Activated CD4-positive, alpha-beta T cell treated with anti-CD3 and anti-CD28 coated beads for 36 hours (primary cell): ENCODE measurements at regions of chr17 and their contacts with region 1.

Region 1: DNA sequence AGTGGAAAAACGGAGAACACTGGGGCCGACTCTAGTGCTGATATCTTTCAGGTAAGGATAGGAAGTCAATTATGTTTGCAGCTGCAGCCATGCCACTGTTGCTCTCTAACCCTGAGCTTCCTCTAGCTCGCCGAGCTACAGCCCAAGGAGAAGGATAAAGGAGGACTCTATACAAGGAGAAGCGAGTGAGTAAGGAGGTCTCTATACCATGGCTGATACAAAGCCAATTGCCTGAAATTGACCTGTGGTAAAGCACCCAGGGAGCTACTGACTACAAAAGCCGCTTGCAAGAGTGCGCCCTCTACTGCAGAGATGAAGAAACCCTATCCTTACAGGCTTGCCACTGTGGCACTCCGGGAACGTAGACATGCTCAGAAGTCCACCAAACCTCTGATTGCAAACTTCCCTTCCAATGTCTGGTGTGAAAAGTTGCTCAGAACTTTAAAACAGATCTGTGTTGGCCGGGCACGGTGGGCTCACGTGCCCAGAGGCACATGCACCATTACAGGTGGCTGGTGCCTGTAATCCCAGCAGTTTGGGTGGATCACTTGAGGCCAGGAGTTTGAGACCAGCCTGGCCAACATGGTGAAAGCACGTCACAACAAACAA is 10.8 kb upstream of the SLC46A1 start:
- DNase-seq: peak; percentile 75
- ATAC-seq: peak; percentile 96
- H3K4me3 Mint-ChIP-seq: no peak overlapping the region
- H3K27ac Mint-ChIP-seq: no peak overlapping the region
- H3K4me1 Mint-ChIP-seq: no peaks in the 10 kb centered on the region
- H3K27me3 Mint-ChIP-seq: peaks cover 6% of the 10 kb centered on the region

Region 2: DNA sequence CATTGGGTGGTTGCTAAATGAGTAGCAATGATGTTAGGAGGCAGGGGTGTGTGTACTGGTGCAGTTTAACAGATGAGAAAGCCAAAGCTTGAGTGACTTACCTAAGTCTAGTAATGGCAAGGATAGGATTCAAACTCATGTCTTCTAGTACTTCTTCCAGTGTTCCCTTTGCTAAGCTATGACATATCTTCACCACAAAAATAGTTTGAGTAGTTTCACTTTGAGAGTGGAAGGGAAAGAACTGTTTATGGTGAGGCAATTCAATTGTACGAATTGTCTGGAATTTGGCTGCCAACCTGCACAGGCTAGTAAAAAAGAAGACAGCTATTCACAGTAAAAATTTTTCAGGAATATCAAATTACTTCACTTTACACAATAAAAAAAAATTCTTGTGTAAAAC is 236.4 kb before region 1 on chr17:
- CTCF ChIA-PET with region 1: no interaction called
- POLR2A ChIA-PET with region 1: no interaction called
- intact Hi-C with region 1: loop called in 1 of 2 experiments (anchors 5 kb)
- DNase-seq: no peak
- ATAC-seq: peak; percentile 66
- H3K4me3 Mint-ChIP-seq: no peak overlapping the region
- H3K27ac Mint-ChIP-seq: no peak overlapping the region
- H3K4me1 Mint-ChIP-seq: peaks cover 5% of the 10 kb centered on the region
- H3K27me3 Mint-ChIP-seq: no peaks in the 10 kb centered on the region

Region 3: GRCh38 chr17:28227316-28228125 is 189.3 kb before region 1 on chr17:
- CTCF ChIA-PET with region 1: interaction called, 5 read pairs
- POLR2A ChIA-PET with region 1: no interaction called
- intact Hi-C with region 1: loop called in 1 of 2 experiments (anchors 5 kb)
- DNase-seq: peak; percentile 55
- ATAC-seq: peak; percentile 54
- H3K4me3 Mint-ChIP-seq: peak overlapping the region; percentile 73
- H3K27ac Mint-ChIP-seq: no peak overlapping the region
- H3K4me1 Mint-ChIP-seq: peaks cover 9% of the 10 kb centered on the region
- H3K27me3 Mint-ChIP-seq: peaks cover 25% of the 10 kb centered on the region

Region 4: GRCh38 chr17:28384281-28385036 is 32.3 kb before region 1 on chr17:
- CTCF ChIA-PET with region 1: no interaction called
- POLR2A ChIA-PET with region 1: no interaction called
- intact Hi-C with region 1: loop called in 1 of 2 experiments (anchors 2 kb)
- DNase-seq: peak; percentile 85
- ATAC-seq: peak; percentile 93
- H3K4me3 Mint-ChIP-seq: peak overlapping the region; percentile 86
- H3K27ac Mint-ChIP-seq: peak overlapping the region; percentile 73
- H3K4me1 Mint-ChIP-seq: peaks cover 17% of the 10 kb centered on the region
- H3K27me3 Mint-ChIP-seq: peaks cover 11% of the 10 kb centered on the region

Region 5: GRCh38 chr17:28405632-28406472 is 11.0 kb before region 1 on chr17 and contains the start of gene SLC46A1:
- CTCF ChIA-PET with region 1: interaction called, 26 read pairs
- POLR2A ChIA-PET with region 1: no interaction called
- intact Hi-C with region 1: no loop called
- DNase-seq: peak; percentile 73
- ATAC-seq: peak; percentile 87
- H3K4me3 Mint-ChIP-seq: peak within 1 kb of the TSS; percentile 75
- H3K27ac Mint-ChIP-seq: peak within 1 kb of the TSS; percentile 19
- H3K4me1 Mint-ChIP-seq: peaks cover 14% of the 10 kb centered on the region
- H3K27me3 Mint-ChIP-seq: peaks cover 11% of the 10 kb centered on the region
- total RNA-seq, gene SLC46A1: 3.0 to 4.0 TPM

Region 6: GRCh38 chr17:28433721-28434120 is 16.9 kb after region 1 on chr17:
- CTCF ChIA-PET with region 1: interaction called, 16 read pairs
- POLR2A ChIA-PET with region 1: no interaction called
- intact Hi-C with region 1: no loop called
- DNase-seq: no peak
- ATAC-seq: no peak
- H3K4me3 Mint-ChIP-seq: no peak overlapping the region
- H3K27ac Mint-ChIP-seq: no peak overlapping the region
- H3K4me1 Mint-ChIP-seq: no peaks in the 10 kb centered on the region
- H3K27me3 Mint-ChIP-seq: peaks cover 16% of the 10 kb centered on the region